Esophagus squamous epithelium (tissue), 5 donors: ENCODE measurements at regions of chr1 and their contacts with region 1.

Region 1: GRCh38 chr1:162056043-162056442 is 13.4 kb upstream of the NOS1AP start:
- DNase-seq: no peak
- H3K4me3 ChIP-seq: no peak overlapping the region
- H3K27ac ChIP-seq: no peak overlapping the region
- H3K4me1 ChIP-seq: no peaks in the 10 kb centered on the region
- H3K27me3 ChIP-seq: peaks cover 0 to 7% (median 0%) of the 10 kb centered on the region in 4 donors
- CTCF ChIP-seq: peak; percentile 34 to 88 (median 81)
- POLR2A ChIP-seq: no peak

Region 2: DNA sequence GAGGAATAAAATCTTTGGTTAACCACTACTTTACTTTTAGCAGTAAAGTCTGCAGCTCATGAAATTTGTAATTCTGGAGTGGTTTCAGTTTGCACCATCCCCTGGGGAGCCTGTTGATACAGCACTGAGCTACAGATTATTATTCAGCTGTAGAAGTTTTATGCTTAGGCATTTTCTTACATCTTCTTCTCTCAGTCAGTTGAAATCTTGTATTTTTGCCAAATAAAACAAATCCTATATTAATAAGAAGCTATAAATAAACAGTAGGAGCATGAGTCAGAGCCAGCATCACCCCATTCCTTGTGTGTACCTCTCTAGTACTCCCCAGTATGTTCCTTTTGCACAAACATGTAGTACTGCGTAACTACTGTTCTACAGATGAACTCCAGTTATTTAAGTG is 171.0 kb before region 1 on chr1:
- intact Hi-C with region 1: no loop called
- DNase-seq: no peak
- H3K4me3 ChIP-seq: no peak overlapping the region
- H3K27ac ChIP-seq: no peak overlapping the region
- H3K4me1 ChIP-seq: peaks cover 0 to 11% (median 0%) of the 10 kb centered on the region in 3 donors
- H3K27me3 ChIP-seq: no peaks in the 10 kb centered on the region
- CTCF ChIP-seq: no peak
- POLR2A ChIP-seq: no peak

Region 3: DNA sequence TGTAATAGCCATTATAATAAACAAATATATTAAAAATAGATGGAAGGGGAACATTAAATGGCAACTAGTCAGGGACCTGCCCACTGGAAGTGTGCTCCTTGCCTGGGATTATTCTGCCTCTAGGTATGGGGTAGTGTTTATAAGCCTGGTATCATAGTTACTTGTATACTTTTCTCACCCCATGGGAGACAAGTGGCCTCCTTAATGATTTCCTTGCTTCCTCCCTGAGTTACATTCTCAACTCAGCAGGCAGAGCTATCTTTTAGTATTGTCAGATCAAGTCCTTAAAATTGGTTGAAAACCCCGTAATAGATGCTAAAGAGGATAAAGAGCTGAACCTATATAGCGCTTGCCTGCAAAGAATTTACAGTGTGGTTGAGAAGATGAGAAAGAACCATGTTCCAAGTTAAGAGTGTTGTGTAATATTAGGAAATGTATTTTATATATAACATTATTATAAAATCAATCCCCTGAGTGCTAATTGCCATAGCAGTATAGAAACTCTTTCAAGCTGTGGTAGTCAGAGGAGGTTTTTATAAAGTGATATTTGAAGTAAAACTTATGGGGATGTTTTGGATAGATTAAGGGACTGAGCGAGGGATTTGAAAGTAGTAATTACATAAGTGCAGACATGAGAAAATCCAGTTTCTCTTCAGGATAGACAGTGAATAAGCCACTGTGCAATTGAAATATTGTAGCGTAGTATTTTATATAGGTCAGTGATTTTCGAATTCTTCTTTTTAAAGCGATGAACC is 214.2 kb after region 1 on chr1:
- intact Hi-C with region 1: loop called (anchors 5 kb)
- DNase-seq: no peak
- H3K4me3 ChIP-seq: no peak overlapping the region
- H3K27ac ChIP-seq: no peak overlapping the region
- H3K4me1 ChIP-seq: no peaks in the 10 kb centered on the region
- H3K27me3 ChIP-seq: no peaks in the 10 kb centered on the region
- CTCF ChIP-seq: no peak
- POLR2A ChIP-seq: no peak